CD8-positive, alpha-beta T cell (primary cell): ENCODE measurements at regions of chr16 and their contacts with region 1.

Region 1: GRCh38 chr16:28180655-28181460 is 30.9 kb downstream of the XPO6 start:
- DNase-seq: peak in 1 of 9 experiments; percentile 65
- ATAC-seq: no peak
- H3K4me3 ChIP-seq: no peak overlapping the region
- H3K4me3 Mint-ChIP-seq: peak overlapping the region; percentile 44
- H3K27ac ChIP-seq: peak overlapping the region in 1 of 2 experiments; percentile 35
- H3K27ac Mint-ChIP-seq: peak overlapping the region; percentile 87
- H3K4me1 ChIP-seq: peaks cover 66% of the 10 kb centered on the region
- H3K4me1 Mint-ChIP-seq: peaks cover 83% of the 10 kb centered on the region
- H3K27me3 ChIP-seq: no peaks in the 10 kb centered on the region
- H3K27me3 Mint-ChIP-seq: no peaks in the 10 kb centered on the region
- CTCF ChIP-seq: no peak

Region 2: GRCh38 chr16:28149011-28149888 is 31.6 kb before region 1 on chr16:
- CTCF ChIA-PET with region 1: interaction called, 6 read pairs
- POLR2A ChIA-PET with region 1: interaction called, 7 read pairs
- intact Hi-C with region 1: loop called in 1 of 2 experiments (anchors 1 kb)
- DNase-seq: peak in 6 of 9 experiments; percentile 42 to 69 (median 50)
- ATAC-seq: peak; percentile 82
- H3K4me3 ChIP-seq: no peak overlapping the region
- H3K4me3 Mint-ChIP-seq: peak overlapping the region; percentile 38
- H3K27ac ChIP-seq: peak overlapping the region; percentile 25 to 55
- H3K27ac Mint-ChIP-seq: peak overlapping the region; percentile 90
- H3K4me1 ChIP-seq: peaks cover 67% of the 10 kb centered on the region
- H3K4me1 Mint-ChIP-seq: peaks cover 85% of the 10 kb centered on the region
- H3K27me3 ChIP-seq: no peaks in the 10 kb centered on the region
- H3K27me3 Mint-ChIP-seq: no peaks in the 10 kb centered on the region
- CTCF ChIP-seq: peak; percentile 22

Region 3: GRCh38 chr16:28193530-28194423 is 12.9 kb after region 1 on chr16:
- CTCF ChIA-PET with region 1: interaction called, 4 read pairs
- POLR2A ChIA-PET with region 1: interaction called, 5 read pairs
- intact Hi-C with region 1: loop called in 1 of 2 experiments (anchors 1 kb)
- DNase-seq: peak in 5 of 9 experiments; percentile 42 to 75 (median 57)
- ATAC-seq: no peak
- H3K4me3 ChIP-seq: peak overlapping the region; percentile 18 to 40
- H3K4me3 Mint-ChIP-seq: peak overlapping the region; percentile 81
- H3K27ac ChIP-seq: peak overlapping the region; percentile 61 to 86
- H3K27ac Mint-ChIP-seq: peak overlapping the region; percentile 98
- H3K4me1 ChIP-seq: peaks cover 80% of the 10 kb centered on the region
- H3K4me1 Mint-ChIP-seq: peaks cover 80% of the 10 kb centered on the region
- H3K27me3 ChIP-seq: no peaks in the 10 kb centered on the region
- H3K27me3 Mint-ChIP-seq: no peaks in the 10 kb centered on the region
- CTCF ChIP-seq: no peak